Activated CD4-positive, alpha-beta T cell treated with anti-CD3 and anti-CD28 coated beads for 36 hours (primary cell): ENCODE measurements at regions of chr15 and their contacts with region 1.

Region 1: GRCh38 chr15:24054547-24055245 is 367.6 kb upstream of the NDN start:
- DNase-seq: no peak
- ATAC-seq: no peak
- H3K4me3 Mint-ChIP-seq: no peak overlapping the region
- H3K27ac Mint-ChIP-seq: no peak overlapping the region
- H3K4me1 Mint-ChIP-seq: no peaks in the 10 kb centered on the region
- H3K27me3 Mint-ChIP-seq: no peaks in the 10 kb centered on the region

Region 2: DNA sequence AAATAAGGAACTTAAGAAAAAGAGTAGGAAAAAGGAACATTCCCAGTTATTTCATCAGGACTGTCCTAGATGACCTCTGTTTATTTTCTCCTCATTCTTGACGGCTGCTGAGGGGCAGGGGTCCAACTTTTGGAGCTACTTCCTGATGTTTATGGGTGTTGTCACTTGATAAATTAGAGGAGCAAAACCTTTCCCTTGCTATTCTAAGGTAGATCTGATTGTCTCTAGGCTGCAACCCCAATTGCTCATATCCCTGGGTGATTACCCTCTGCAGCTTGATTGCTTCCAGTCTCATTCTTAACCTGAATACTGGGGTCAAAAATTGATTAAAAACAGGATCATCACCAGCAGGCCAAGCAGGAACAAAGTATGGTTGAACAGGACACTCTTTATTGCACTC is 56.6 kb before region 1 on chr15:
- CTCF ChIA-PET with region 1: no interaction called
- POLR2A ChIA-PET with region 1: no interaction called
- intact Hi-C with region 1: loop called in 1 of 2 experiments (anchors 10 kb)
- DNase-seq: no peak
- ATAC-seq: no peak
- H3K4me3 Mint-ChIP-seq: no peak overlapping the region
- H3K27ac Mint-ChIP-seq: no peak overlapping the region
- H3K4me1 Mint-ChIP-seq: no peaks in the 10 kb centered on the region
- H3K27me3 Mint-ChIP-seq: no peaks in the 10 kb centered on the region

Region 3: DNA sequence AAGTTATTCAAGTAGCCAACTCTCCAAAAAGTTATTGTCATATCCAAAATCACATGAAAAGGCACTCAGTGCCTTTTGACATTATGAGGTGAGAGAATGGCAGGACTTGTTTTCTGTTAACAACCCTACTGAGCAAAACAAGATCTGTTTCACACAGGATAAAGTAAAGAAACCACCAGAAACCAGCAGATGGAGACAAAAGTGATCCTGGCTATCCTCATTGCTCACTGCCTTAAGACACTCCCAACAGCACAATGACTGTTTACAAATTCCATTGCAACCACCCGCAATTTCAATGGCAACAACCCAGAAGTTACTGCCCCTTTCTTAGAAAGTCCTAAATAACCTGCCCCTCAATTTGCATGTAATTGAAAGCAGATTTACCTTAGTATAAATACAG is 15.0 kb before region 1 on chr15:
- CTCF ChIA-PET with region 1: no interaction called
- POLR2A ChIA-PET with region 1: no interaction called
- intact Hi-C with region 1: no loop called
- DNase-seq: no peak
- ATAC-seq: no peak
- H3K4me3 Mint-ChIP-seq: no peak overlapping the region
- H3K27ac Mint-ChIP-seq: no peak overlapping the region
- H3K4me1 Mint-ChIP-seq: no peaks in the 10 kb centered on the region
- H3K27me3 Mint-ChIP-seq: no peaks in the 10 kb centered on the region